Caco-2 (cell line): ENCODE measurements at regions of chr11 and their contacts with region 1.

Region 1: DNA sequence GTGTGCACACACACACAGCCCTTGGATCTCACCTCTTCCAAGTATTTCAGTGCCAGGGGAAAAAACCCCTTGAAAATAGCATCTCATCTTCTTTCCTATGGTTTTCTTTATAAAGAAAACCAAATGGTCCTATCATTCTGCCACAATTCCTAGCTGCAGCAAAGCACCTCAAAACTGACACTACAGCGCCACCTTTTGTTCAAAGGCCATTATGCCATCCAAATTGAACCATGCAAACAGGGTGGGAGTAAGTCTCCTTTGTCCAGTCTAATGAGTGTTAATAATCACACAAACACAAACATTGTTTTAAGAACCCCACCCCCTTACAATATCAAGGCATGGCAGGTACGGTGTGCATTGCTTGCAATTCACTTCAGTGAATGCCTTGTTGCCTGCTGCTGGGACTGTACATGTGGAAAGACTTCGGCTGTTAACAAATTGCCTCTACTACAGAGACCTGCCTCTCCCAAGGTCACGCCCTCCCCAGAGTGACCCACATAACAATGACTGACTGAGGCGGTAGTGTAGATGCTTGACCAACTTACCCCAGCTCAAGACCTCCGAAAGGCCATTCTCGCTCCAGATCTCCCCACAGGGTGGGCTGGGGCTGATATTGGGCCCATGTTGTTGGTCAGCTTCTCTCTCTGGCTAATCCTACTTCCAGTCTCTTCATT is 31.7 kb downstream of the FAM181B start:
- DNase-seq: peak; percentile 59 to 71
- H3K4me3 ChIP-seq: no peak overlapping the region
- H3K4me3 Mint-ChIP-seq: no peak overlapping the region
- H3K27ac Mint-ChIP-seq: no peak overlapping the region
- H3K4me1 ChIP-seq: no peaks in the 10 kb centered on the region
- H3K4me1 Mint-ChIP-seq: no peaks in the 10 kb centered on the region
- H3K27me3 ChIP-seq: no peaks in the 10 kb centered on the region; the same call in 1 of the 2 replicates
- H3K27me3 Mint-ChIP-seq: peaks cover 2% of the 10 kb centered on the region
- CTCF ChIP-seq: peak; percentile 81 to 86

Region 2: DNA sequence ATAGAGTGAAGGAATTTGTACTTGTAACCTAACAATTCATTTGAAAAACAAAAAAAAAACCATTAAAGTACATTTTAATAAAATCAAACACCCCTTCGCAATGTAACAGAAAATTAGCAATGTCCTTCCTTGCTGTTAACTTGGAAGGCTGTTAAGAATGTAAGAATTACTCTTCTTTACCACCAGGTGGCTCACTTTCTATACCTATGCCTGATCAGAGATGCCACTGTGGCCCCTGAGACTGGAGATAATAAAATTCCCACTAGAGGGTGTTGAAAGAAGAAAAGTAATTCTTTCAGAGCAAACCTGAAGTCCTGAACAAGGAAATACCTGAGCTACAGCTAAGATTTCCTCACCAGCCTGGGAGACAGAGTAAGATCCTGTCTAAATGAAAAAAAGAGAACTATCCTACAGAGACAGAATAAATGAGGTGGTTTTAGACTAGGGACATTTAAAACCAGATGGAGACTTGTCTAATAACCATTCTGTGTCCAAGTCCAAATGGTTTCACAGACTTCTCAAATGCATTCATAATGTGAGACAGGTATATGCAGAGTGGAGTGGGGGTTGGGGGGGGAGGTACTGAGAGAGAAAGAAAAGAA is 1057.6 kb before region 1 on chr11:
- CTCF ChIA-PET with region 1: no interaction called
- POLR2A ChIA-PET with region 1: no interaction called
- intact Hi-C with region 1: loop called (anchors 2 kb)
- DNase-seq: peak; percentile 61 to 65
- H3K4me3 ChIP-seq: no peak overlapping the region
- H3K4me3 Mint-ChIP-seq: no peak overlapping the region
- H3K27ac Mint-ChIP-seq: no peak overlapping the region
- H3K4me1 ChIP-seq: no peaks in the 10 kb centered on the region
- H3K4me1 Mint-ChIP-seq: peaks cover 6% of the 10 kb centered on the region
- H3K27me3 ChIP-seq: 0 out of 2 replicates have a peak, but pooled peaks cover 1% of the 10 kb centered on the region
- H3K27me3 Mint-ChIP-seq: peaks cover 16% of the 10 kb centered on the region
- CTCF ChIP-seq: peak; percentile 88 to 94

Region 3: DNA sequence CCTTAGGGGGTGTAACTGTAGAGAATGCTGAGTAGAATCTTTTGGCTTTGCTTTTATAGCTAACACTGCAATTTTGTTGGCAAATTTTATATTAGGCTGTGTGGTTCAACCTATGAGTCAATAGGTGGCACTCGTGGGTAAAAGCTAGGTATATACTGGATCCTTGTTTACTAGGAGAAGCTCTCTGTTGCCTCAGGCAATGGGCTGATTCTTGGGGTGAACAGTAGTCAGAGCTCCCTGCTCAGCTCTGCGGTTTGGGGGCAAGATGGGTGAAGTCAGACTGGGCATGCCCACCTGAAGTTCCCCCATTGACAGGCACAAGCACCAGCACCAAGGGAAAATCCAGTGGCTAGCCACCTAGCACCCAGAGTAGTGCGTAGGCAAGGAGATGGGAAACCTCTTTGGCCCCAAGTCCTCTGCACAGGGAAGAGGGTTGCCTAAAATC is 207.0 kb before region 1 on chr11:
- CTCF ChIA-PET with region 1: interaction called, 25 read pairs
- POLR2A ChIA-PET with region 1: no interaction called
- intact Hi-C with region 1: no loop called
- DNase-seq: peak in 1 of 2 experiments; percentile 32
- H3K4me3 ChIP-seq: no peak overlapping the region
- H3K4me3 Mint-ChIP-seq: no peak overlapping the region
- H3K27ac Mint-ChIP-seq: no peak overlapping the region
- H3K4me1 ChIP-seq: no peaks in the 10 kb centered on the region
- H3K4me1 Mint-ChIP-seq: no peaks in the 10 kb centered on the region
- H3K27me3 ChIP-seq: no peaks in the 10 kb centered on the region
- H3K27me3 Mint-ChIP-seq: no peaks in the 10 kb centered on the region
- CTCF ChIP-seq: peak; percentile 35 to 52

Region 4: GRCh38 chr11:82631722-82632630 is 70.0 kb before region 1 on chr11:
- CTCF ChIA-PET with region 1: no interaction called
- POLR2A ChIA-PET with region 1: no interaction called
- intact Hi-C with region 1: no loop called
- DNase-seq: no peak
- H3K4me3 ChIP-seq: no peak overlapping the region
- H3K4me3 Mint-ChIP-seq: no peak overlapping the region
- H3K27ac Mint-ChIP-seq: no peak overlapping the region
- H3K4me1 ChIP-seq: no peaks in the 10 kb centered on the region
- H3K4me1 Mint-ChIP-seq: no peaks in the 10 kb centered on the region
- H3K27me3 ChIP-seq: no peaks in the 10 kb centered on the region
- H3K27me3 Mint-ChIP-seq: peaks cover 5% of the 10 kb centered on the region
- CTCF ChIP-seq: no peak

Region 5: DNA sequence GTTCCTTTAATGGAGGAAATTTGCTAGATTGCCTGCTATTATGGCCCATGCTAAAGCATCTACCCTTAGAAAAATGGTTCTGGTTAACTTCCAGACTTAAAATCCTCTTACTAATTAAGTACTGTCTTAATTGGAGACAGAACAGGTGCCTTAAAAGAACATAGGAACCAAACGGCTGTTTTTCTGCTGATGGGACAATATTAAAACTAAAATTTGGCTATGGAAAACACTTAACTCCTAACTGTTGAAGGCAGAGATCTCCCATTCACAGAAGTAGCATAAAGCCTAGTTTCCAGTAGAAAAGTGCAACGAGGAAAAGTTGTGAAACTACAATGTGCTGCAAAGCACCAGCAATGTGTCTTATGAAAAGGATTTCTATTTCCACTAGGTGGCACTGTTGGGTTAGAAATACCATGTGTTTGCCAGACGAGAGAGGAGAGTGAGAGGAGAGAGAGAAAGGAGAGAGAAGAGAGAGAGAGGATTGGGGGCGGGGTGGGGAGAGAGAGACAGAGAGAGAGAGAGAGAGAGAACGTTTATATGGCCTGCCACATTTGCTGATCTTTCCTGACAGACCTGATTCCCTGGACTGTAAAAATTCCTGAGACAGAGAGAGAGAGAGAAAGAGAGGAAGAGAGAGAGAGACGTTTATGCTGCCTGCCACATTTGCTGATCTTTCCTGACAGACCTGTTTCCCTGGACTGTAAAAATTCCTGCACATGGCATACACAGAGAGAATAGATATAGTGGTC is 19.8 kb before region 1 on chr11:
- CTCF ChIA-PET with region 1: interaction called, 14 read pairs
- POLR2A ChIA-PET with region 1: no interaction called
- intact Hi-C with region 1: loop called (anchors 2 kb)
- DNase-seq: peak; percentile 57 to 78
- H3K4me3 ChIP-seq: no peak overlapping the region
- H3K4me3 Mint-ChIP-seq: peak overlapping the region; percentile 45
- H3K27ac Mint-ChIP-seq: no peak overlapping the region
- H3K4me1 ChIP-seq: no peaks in the 10 kb centered on the region
- H3K4me1 Mint-ChIP-seq: peaks cover 12% of the 10 kb centered on the region
- H3K27me3 ChIP-seq: no peaks in the 10 kb centered on the region; the same call in 1 of the 2 replicates
- H3K27me3 Mint-ChIP-seq: peaks cover 3% of the 10 kb centered on the region
- CTCF ChIP-seq: peak; percentile 72 to 76